ENCODE measurements at regions of chr13 and their contacts with region 1.

Region 1: GRCh38 chr13:24727731-24728601 is 36.0 kb upstream of the RNF17 start:
- DNase-seq: peak; percentile 74
- H3K4me3 Mint-ChIP-seq: no peak overlapping the region
- H3K27ac Mint-ChIP-seq: no peak overlapping the region
- H3K4me1 Mint-ChIP-seq: peaks cover 15% of the 10 kb centered on the region
- H3K27me3 Mint-ChIP-seq: peaks cover 22% of the 10 kb centered on the region

Region 2: DNA sequence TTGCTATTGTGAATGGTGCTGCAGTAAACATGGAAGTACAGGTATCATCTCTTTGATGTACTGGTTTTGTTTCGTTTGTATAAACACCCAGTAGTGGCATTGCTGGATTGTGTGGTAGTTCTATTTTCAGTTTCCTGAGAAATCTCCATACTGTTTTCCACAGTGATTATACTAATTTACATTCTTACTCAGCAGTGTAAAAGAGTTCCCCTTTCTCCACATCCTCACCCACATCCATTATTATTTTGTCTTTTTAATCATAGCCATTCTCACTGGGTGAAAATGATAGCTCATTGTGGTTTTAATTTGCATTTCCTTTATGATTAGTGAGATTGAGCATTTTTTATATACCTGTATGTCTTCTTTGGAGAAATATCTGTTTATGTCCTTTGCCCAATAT is 153.1 kb before region 1 on chr13:
- CTCF ChIA-PET with region 1: interaction called, 24 read pairs
- POLR2A ChIA-PET with region 1: no interaction called
- DNase-seq: no peak
- H3K4me3 Mint-ChIP-seq: no peak overlapping the region
- H3K27ac Mint-ChIP-seq: no peak overlapping the region
- H3K4me1 Mint-ChIP-seq: peaks cover 17% of the 10 kb centered on the region
- H3K27me3 Mint-ChIP-seq: peaks cover 1% of the 10 kb centered on the region

Region 3: DNA sequence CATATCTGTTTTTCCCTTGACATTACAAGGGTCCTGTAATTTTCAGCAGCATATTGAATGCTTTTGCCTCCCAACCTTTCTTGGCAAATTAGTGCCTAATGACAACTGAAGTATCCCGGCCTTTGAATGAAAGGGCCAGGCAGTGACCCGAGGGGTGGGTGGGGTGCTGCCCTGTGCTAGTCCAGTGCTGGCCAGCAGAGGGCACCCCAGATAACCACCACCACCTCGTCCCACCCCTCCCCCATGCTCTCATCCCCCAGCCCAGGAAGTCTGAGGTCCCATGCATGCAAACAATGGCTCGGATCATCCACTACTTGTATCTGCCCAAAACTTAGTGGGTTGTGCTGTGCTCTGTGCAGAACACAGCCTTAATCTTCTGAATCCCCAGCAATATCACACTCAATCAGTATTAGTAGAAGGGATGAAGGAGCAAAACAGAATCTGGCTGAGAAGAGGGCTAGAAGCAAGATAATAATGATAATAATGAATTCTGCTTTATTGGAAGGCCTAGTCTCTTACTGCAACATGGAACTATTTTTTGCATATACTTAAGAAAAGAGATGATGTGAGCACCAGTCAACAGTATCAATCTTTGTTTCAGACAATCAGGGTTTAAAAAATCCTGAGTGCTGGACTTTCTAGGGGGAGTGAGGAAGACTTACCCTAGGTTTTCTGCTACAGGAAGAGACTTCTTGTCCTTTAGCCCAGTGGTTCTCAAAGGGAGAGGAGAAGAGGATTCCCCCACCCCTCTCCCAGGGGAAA is 43.9 kb before region 1 on chr13:
- CTCF ChIA-PET with region 1: interaction called, 16 read pairs
- POLR2A ChIA-PET with region 1: interaction called, 4 read pairs
- DNase-seq: peak; percentile 70
- H3K4me3 Mint-ChIP-seq: no peak overlapping the region
- H3K27ac Mint-ChIP-seq: peak overlapping the region; percentile 11
- H3K4me1 Mint-ChIP-seq: peaks cover 35% of the 10 kb centered on the region
- H3K27me3 Mint-ChIP-seq: peaks cover 34% of the 10 kb centered on the region

Region 4: GRCh38 chr13:24693862-24694471 is 34.0 kb before region 1 on chr13:
- CTCF ChIA-PET with region 1: interaction called, 55 read pairs
- POLR2A ChIA-PET with region 1: interaction called, 5 read pairs
- DNase-seq: peak; percentile 60
- H3K4me3 Mint-ChIP-seq: peak overlapping the region; percentile 3
- H3K27ac Mint-ChIP-seq: no peak overlapping the region
- H3K4me1 Mint-ChIP-seq: peaks cover 18% of the 10 kb centered on the region
- H3K27me3 Mint-ChIP-seq: peaks cover 38% of the 10 kb centered on the region

Region 5: DNA sequence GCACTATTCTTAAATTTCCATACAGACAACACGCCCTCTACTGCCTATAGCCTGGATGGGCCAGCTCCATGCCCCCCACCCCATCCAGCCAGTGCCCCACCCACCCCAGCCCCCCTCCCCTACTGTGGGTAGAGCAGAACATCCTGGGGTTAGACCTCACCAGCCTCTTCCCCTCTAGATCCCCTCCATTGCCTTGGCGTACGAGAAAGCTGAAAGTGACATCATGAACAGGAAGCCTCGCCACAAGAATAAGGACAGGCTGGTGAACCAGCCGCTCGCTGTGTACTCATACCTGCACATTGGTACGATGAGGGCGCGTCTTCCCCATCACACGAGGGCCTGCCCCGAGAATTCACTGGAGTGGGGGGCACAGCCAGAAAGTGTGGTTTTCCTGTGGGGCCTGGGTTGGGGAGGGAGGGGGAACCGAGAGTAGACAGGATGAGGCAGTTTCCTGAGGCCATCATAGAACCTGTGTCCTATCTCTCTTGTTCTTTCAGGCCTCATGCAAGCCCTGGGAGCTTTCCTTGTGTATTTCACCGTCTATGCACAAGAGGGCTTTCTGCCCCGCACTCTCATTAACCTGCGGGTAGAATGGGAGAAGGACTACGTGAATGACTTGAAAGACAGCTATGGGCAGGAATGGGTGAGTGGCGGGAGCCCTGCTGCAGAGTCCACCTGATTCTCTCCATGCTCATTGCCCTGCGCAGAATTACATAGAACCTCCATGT is 18.6 kb before region 1 on chr13:
- CTCF ChIA-PET with region 1: interaction called, 13 read pairs
- POLR2A ChIA-PET with region 1: interaction called, 3 read pairs
- DNase-seq: peak; percentile 80
- H3K4me3 Mint-ChIP-seq: peak overlapping the region; percentile 52
- H3K27ac Mint-ChIP-seq: peak overlapping the region; percentile 77
- H3K4me1 Mint-ChIP-seq: peaks cover 28% of the 10 kb centered on the region
- H3K27me3 Mint-ChIP-seq: peaks cover 6% of the 10 kb centered on the region

Region 6: GRCh38 chr13:24763596-24764275 is 35.8 kb after region 1 on chr13 and contains the start of gene RNF17:
- CTCF ChIA-PET with region 1: no interaction called
- POLR2A ChIA-PET with region 1: no interaction called
- DNase-seq: no peak
- H3K4me3 Mint-ChIP-seq: no peak within 1 kb of the TSS
- H3K27ac Mint-ChIP-seq: no peak within 1 kb of the TSS
- H3K4me1 Mint-ChIP-seq: no peaks in the 10 kb centered on the region
- H3K27me3 Mint-ChIP-seq: peaks cover 20% of the 10 kb centered on the region
- total RNA-seq, gene RNF17: not detected